Activated T-helper 1 cell treated with anti-CD3 and anti-CD28 coated beads, Interleukin-12 subunit alpha, Interleukin-12 subunit beta, Interleukin-2, Interleukin-4 antibody, amounts not matched to agents 30 ng/mL and 10 ng/mL and 1 ng/mL, durations not matched to agents 14 hours and 24 hours and 36 hours (primary cell): ENCODE measurements at regions of chr2 and their contacts with region 1.

Region 1: DNA sequence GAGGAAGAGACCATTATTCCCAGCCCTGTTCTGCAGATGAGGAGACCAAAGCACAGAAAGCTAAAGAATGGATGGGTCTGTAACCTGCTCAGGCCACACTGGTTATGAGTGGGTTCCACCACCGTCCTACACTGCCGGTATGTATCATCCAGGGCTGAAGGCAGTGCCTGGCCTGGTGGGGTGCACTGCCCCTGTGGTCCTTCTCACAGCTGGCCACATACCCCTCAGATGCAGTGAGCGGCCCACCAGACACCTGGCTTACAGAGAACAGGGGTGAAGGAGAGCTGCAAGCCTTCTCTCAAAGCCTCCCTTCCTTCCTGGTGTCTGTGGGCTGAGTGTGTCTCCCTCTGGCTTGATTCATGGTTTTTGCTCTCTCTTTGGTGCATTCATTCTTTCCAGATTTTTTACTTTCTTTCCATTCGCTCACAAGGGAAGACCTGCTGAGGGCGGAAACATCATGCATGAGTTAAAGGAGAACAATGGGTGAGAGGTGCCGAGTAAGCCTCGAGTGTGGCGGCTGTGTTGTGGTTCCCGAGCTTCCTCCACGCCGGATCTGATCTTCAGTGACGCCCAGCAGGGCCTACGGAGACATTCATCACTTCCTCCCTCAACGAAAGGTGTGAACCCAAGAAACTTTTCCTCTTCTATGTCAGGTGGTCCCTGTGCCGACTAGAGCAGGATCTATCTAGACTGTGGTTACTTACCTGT is 62.1 kb upstream of the REL start:
- DNase-seq: peak; percentile 80
- H3K4me3 Mint-ChIP-seq: peak overlapping the region; percentile 20
- H3K27ac Mint-ChIP-seq: peak overlapping the region; percentile 91
- H3K4me1 Mint-ChIP-seq: peaks cover 44% of the 10 kb centered on the region
- H3K27me3 Mint-ChIP-seq: no peaks in the 10 kb centered on the region

Region 2: DNA sequence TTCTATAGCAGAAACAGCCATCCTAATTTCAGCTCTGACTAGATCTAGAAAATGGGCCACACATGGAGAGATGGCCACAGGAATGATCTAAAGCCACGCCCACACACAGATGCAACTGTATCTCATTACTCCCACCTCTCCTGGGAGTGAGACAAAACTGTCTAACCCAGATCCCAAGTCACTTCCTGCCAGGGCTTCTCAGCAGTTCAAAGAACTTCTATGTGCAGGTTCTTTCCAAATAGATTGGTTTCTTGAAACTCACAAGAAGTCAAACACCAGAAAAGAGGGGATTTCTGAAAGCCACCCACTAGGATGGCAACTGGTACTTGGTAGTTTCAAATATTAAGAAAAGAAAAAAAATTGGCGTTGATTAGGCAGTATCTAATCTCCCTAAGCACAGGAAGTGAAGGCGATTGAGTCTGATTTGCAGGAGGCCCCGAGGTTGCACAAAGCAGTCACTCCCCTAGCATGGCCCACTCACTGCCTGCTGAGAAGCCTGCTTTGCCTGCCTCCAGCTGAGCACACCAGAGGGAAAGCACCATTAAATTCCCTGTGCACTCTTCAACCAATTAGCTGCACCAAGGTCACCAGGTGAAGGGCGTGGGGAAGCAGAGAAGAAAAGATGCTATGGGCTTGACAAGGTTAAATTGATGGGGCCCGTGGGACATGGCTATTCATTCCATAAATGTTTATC is 12.2 kb before region 1 on chr2:
- intact Hi-C with region 1: loop called (anchors 1 kb)
- DNase-seq: no peak
- H3K4me3 Mint-ChIP-seq: peak overlapping the region; percentile 32
- H3K27ac Mint-ChIP-seq: peak overlapping the region; percentile 83
- H3K4me1 Mint-ChIP-seq: peaks cover 46% of the 10 kb centered on the region
- H3K27me3 Mint-ChIP-seq: no peaks in the 10 kb centered on the region

Region 3: GRCh38 chr2:60873381-60873780 is 54.1 kb after region 1 on chr2:
- intact Hi-C with region 1: loop called (anchors 1 kb)
- DNase-seq: no peak
- H3K4me3 Mint-ChIP-seq: no peak overlapping the region
- H3K27ac Mint-ChIP-seq: no peak overlapping the region
- H3K4me1 Mint-ChIP-seq: peaks cover 39% of the 10 kb centered on the region
- H3K27me3 Mint-ChIP-seq: no peaks in the 10 kb centered on the region

Region 4: GRCh38 chr2:60976875-60977561 is 157.7 kb after region 1 on chr2:
- intact Hi-C with region 1: loop called (anchors 1 kb)
- DNase-seq: no peak
- H3K4me3 Mint-ChIP-seq: no peak overlapping the region
- H3K27ac Mint-ChIP-seq: peak overlapping the region; percentile 38
- H3K4me1 Mint-ChIP-seq: peaks cover 29% of the 10 kb centered on the region
- H3K27me3 Mint-ChIP-seq: no peaks in the 10 kb centered on the region

Region 5: GRCh38 chr2:62099523-62100175 is 1280.3 kb after region 1 on chr2:
- intact Hi-C with region 1: no loop called
- DNase-seq: no peak
- H3K4me3 Mint-ChIP-seq: no peak overlapping the region
- H3K27ac Mint-ChIP-seq: no peak overlapping the region
- H3K4me1 Mint-ChIP-seq: no peaks in the 10 kb centered on the region
- H3K27me3 Mint-ChIP-seq: no peaks in the 10 kb centered on the region